HAP-1 (cell line): ENCODE measurements at regions of chr10 and their contacts with region 1.

Region 1: DNA sequence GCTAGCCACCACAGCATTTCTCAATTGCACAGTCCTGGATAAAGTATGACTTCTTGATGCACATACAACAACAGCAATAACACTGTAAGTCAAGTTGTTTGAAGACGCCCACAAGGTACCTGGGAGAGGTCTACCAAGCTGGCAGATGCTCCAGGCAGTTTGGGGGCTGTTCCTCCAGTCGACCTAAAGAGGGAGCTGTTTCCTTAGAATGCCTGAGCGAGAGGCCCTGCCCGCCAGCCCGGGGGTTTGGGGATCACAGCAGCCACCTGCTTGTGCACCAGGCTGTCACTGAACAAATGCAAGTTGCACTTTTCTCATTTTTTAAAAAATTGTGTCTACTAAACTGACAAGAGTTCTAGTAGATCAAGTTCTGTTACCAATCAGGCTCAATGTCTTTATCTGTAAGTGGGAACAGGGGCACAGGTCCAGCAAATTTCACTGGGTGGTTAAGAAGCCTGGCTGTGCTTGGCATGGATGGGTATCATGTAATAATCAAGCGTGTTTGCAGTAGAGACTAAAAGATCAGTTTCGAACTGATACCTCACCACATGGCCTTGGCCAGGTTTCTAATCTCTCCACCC is 193.8 kb upstream of the ADO start:
- DNase-seq: peak; percentile 16 to 78
- H3K4me3 ChIP-seq: no peak overlapping the region
- H3K4me1 ChIP-seq: no peaks in the 10 kb centered on the region
- H3K27me3 ChIP-seq: no peaks in the 10 kb centered on the region

Region 2: GRCh38 chr10:62816331-62817120 is 205.8 kb after region 1 on chr10 and contains the start of gene EGR2:
- in situ Hi-C with region 1: loop called (anchors 10 kb)
- DNase-seq: peak; percentile 88 to 93
- H3K4me3 ChIP-seq: peak within 1 kb of the TSS; percentile 86
- H3K4me1 ChIP-seq: peaks cover 8% of the 10 kb centered on the region
- H3K27me3 ChIP-seq: peaks cover 19% of the 10 kb centered on the region

Region 3: GRCh38 chr10:63042256-63042655 is 431.5 kb after region 1 on chr10:
- in situ Hi-C with region 1: no loop called
- DNase-seq: no peak
- H3K4me3 ChIP-seq: no peak overlapping the region
- H3K4me1 ChIP-seq: no peaks in the 10 kb centered on the region
- H3K27me3 ChIP-seq: no peaks in the 10 kb centered on the region; the same call in 1 of the 2 replicates

Region 4: GRCh38 chr10:63157845-63158624 is 547.3 kb after region 1 on chr10:
- in situ Hi-C with region 1: loop called (anchors 10 kb)
- DNase-seq: peak; percentile 64 to 88
- H3K4me3 ChIP-seq: no peak overlapping the region
- H3K4me1 ChIP-seq: no peaks in the 10 kb centered on the region
- H3K27me3 ChIP-seq: no peaks in the 10 kb centered on the region